B cell (primary cell): ENCODE measurements at regions of chr6 and their contacts with region 1.

Region 1: GRCh38 chr6:87154993-87155841 is at the start of gene ZNF292:
- DNase-seq: peak; percentile 98
- ATAC-seq: peak; percentile 82
- H3K4me3 ChIP-seq: peak within 1 kb of the TSS; percentile 83 to 96 (median 87)
- H3K4me3 Mint-ChIP-seq: peak within 1 kb of the TSS; percentile 92
- H3K27ac ChIP-seq: peak within 1 kb of the TSS; percentile 96 to 97
- H3K27ac Mint-ChIP-seq: peak within 1 kb of the TSS; percentile 97
- H3K4me1 ChIP-seq: peaks cover 28 to 35% of the 10 kb centered on the region in 2 donors
- H3K4me1 Mint-ChIP-seq: peaks cover 51% of the 10 kb centered on the region
- H3K27me3 ChIP-seq: no peaks in the 10 kb centered on the region
- H3K27me3 Mint-ChIP-seq: no peaks in the 10 kb centered on the region
- CTCF ChIP-seq: no peak
- total RNA-seq, gene ZNF292: 84.1 and 86.5 TPM in 2 replicates

Region 2: GRCh38 chr6:85678602-85679444 is 1476.4 kb before region 1 on chr6:
- CTCF ChIA-PET with region 1: no interaction called
- POLR2A ChIA-PET with region 1: no interaction called
- intact Hi-C with region 1: loop called (anchors 10 kb)
- DNase-seq: peak; percentile 100
- ATAC-seq: peak; percentile 90
- H3K4me3 ChIP-seq: peak overlapping the region; percentile 74 to 98 (median 91)
- H3K4me3 Mint-ChIP-seq: peak overlapping the region; percentile 92
- H3K27ac ChIP-seq: peak overlapping the region; percentile 86 to 89
- H3K27ac Mint-ChIP-seq: peak overlapping the region; percentile 95
- H3K4me1 ChIP-seq: peaks cover 25 to 36% of the 10 kb centered on the region in 2 donors
- H3K4me1 Mint-ChIP-seq: peaks cover 46% of the 10 kb centered on the region
- H3K27me3 ChIP-seq: no peaks in the 10 kb centered on the region
- H3K27me3 Mint-ChIP-seq: no peaks in the 10 kb centered on the region
- CTCF ChIP-seq: no peak

Region 3: GRCh38 chr6:86609549-86610388 is 545.4 kb before region 1 on chr6:
- CTCF ChIA-PET with region 1: no interaction called
- POLR2A ChIA-PET with region 1: no interaction called
- intact Hi-C with region 1: no loop called
- DNase-seq: no peak
- ATAC-seq: no peak
- H3K4me3 ChIP-seq: no peak overlapping the region
- H3K4me3 Mint-ChIP-seq: no peak overlapping the region
- H3K27ac ChIP-seq: no peak overlapping the region
- H3K27ac Mint-ChIP-seq: no peak overlapping the region
- H3K4me1 ChIP-seq: no peaks in the 10 kb centered on the region
- H3K4me1 Mint-ChIP-seq: no peaks in the 10 kb centered on the region
- H3K27me3 ChIP-seq: no peaks in the 10 kb centered on the region
- H3K27me3 Mint-ChIP-seq: no peaks in the 10 kb centered on the region
- CTCF ChIP-seq: no peak

Region 4: GRCh38 chr6:87210979-87211378 is 55.8 kb after region 1 on chr6:
- CTCF ChIA-PET with region 1: no interaction called
- POLR2A ChIA-PET with region 1: no interaction called
- intact Hi-C with region 1: no loop called
- DNase-seq: peak; percentile 10
- ATAC-seq: peak; percentile 21
- H3K4me3 ChIP-seq: no peak overlapping the region
- H3K4me3 Mint-ChIP-seq: no peak overlapping the region
- H3K27ac ChIP-seq: no peak overlapping the region
- H3K27ac Mint-ChIP-seq: peak overlapping the region; percentile 4
- H3K4me1 ChIP-seq: peaks cover 10 to 19% of the 10 kb centered on the region in 2 donors
- H3K4me1 Mint-ChIP-seq: peaks cover 62% of the 10 kb centered on the region
- H3K27me3 ChIP-seq: no peaks in the 10 kb centered on the region
- H3K27me3 Mint-ChIP-seq: no peaks in the 10 kb centered on the region
- CTCF ChIP-seq: no peak

Region 5: DNA sequence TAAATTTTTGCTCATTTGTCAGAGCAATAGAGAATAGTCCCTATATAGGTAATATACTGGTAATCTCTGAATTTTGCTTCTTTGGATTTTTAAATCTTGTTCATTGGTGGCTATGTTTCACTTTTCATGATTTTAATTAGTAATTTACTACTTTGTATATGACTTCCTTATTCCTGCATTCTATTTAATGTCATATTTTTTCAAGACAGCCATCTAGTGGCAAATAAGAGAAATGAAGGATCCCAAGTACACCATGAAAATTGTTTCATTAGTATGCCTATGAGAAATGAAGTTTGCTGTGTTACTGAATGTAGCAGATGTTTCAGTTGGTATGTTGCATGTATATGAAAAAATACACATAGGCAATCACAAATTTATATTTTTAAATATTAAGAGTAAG is 82.6 kb after region 1 on chr6:
- CTCF ChIA-PET with region 1: no interaction called
- POLR2A ChIA-PET with region 1: interaction called, 4 read pairs
- intact Hi-C with region 1: loop called (anchors 5 kb)
- DNase-seq: peak; percentile 39
- ATAC-seq: peak; percentile 49
- H3K4me3 ChIP-seq: no peak overlapping the region
- H3K4me3 Mint-ChIP-seq: no peak overlapping the region
- H3K27ac ChIP-seq: no peak overlapping the region
- H3K27ac Mint-ChIP-seq: no peak overlapping the region
- H3K4me1 ChIP-seq: no peaks in the 10 kb centered on the region
- H3K4me1 Mint-ChIP-seq: peaks cover 3% of the 10 kb centered on the region
- H3K27me3 ChIP-seq: no peaks in the 10 kb centered on the region
- H3K27me3 Mint-ChIP-seq: no peaks in the 10 kb centered on the region
- CTCF ChIP-seq: peak; percentile 52

Region 6: GRCh38 chr6:87407901-87408720 is 252.9 kb after region 1 on chr6 and contains the start of gene CFAP206:
- CTCF ChIA-PET with region 1: no interaction called
- POLR2A ChIA-PET with region 1: interaction called, 11 read pairs
- intact Hi-C with region 1: loop called (anchors 2 kb)
- DNase-seq: peak; percentile 91
- ATAC-seq: peak; percentile 75
- H3K4me3 ChIP-seq: peak within 1 kb of the TSS; percentile 83 to 98 (median 94)
- H3K4me3 Mint-ChIP-seq: peak within 1 kb of the TSS; percentile 91
- H3K27ac ChIP-seq: peak within 1 kb of the TSS; percentile 57 to 81
- H3K27ac Mint-ChIP-seq: peak within 1 kb of the TSS; percentile 86
- H3K4me1 ChIP-seq: peaks cover 4 to 10% of the 10 kb centered on the region in 2 donors
- H3K4me1 Mint-ChIP-seq: peaks cover 9% of the 10 kb centered on the region
- H3K27me3 ChIP-seq: peaks cover 0 to 7% (median 0%) of the 10 kb centered on the region in 4 experiments
- H3K27me3 Mint-ChIP-seq: peaks cover 8% of the 10 kb centered on the region
- CTCF ChIP-seq: no peak
- total RNA-seq, gene CFAP206: not detected in 2 replicates

Region 7: DNA sequence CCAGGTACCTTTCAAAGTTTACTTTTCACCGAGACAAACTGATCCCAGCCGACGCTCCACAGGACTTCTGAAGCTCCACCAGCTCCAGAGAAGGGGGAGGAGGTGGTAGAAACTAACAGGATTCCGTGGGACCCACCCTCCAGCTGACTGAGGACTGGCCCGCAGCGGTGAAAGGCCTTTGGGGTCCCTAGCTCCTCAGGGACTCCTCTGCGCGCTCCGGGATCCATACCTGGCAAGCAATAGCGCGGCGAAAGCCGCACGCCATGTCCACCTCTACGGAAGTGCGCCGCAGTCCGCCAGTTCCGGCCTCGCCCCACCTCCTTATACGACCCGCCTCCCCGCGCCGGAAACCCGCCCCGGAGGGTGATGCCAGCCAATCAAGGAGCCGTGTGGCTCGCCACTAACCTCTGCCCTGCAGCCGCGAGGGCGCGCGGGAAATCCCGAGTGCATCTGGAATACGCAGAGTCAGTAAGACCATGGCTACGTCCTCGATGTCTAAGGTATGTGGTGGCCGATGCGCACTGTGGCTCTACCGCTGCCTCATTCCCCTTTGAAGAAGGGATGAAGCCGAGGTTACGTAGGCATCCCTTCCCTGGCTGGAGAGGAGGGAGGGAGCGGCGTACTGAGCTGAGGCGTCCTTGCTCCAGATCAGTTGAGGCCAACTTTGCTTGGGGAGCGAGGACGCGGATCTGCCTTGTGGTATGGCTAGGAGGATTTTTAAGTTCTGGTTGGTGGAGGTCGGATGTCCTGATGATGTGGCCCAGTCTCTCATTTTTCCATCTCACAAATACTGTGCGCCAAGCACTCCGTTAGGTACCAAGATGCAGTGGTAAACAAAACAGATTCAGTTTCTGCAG is 434.7 kb after region 1 on chr6 and contains the starts of genes ORC3 and RARS2:
- CTCF ChIA-PET with region 1: no interaction called
- POLR2A ChIA-PET with region 1: no interaction called
- intact Hi-C with region 1: loop called (anchors 5 kb)
- DNase-seq: peak; percentile 94
- ATAC-seq: peak; percentile 99
- H3K4me3 ChIP-seq: peak within 1 kb of the TSS; percentile 74 to 100 (median 96)
- H3K4me3 Mint-ChIP-seq: peak within 1 kb of the TSS; percentile 96
- H3K27ac ChIP-seq: peak within 1 kb of the TSS; percentile 78 to 91
- H3K27ac Mint-ChIP-seq: peak within 1 kb of the TSS; percentile 88
- H3K4me1 ChIP-seq: peaks cover 27 to 28% of the 10 kb centered on the region in 2 donors
- H3K4me1 Mint-ChIP-seq: peaks cover 56% of the 10 kb centered on the region
- H3K27me3 ChIP-seq: no peaks in the 10 kb centered on the region
- H3K27me3 Mint-ChIP-seq: no peaks in the 10 kb centered on the region
- CTCF ChIP-seq: no peak
- total RNA-seq, gene ORC3: 27.8 and 31.2 TPM in 2 replicates
- total RNA-seq, gene RARS2: 37.9 and 38.7 TPM in 2 replicates

Region 8: GRCh38 chr6:88963139-88964090 is 1808.2 kb after region 1 on chr6 and contains the start of gene RNGTT:
- CTCF ChIA-PET with region 1: no interaction called
- POLR2A ChIA-PET with region 1: no interaction called
- intact Hi-C with region 1: loop called (anchors 1 kb)
- DNase-seq: peak; percentile 97
- ATAC-seq: peak; percentile 100
- H3K4me3 ChIP-seq: peak within 1 kb of the TSS; percentile 92 to 94 (median 94)
- H3K4me3 Mint-ChIP-seq: peak within 1 kb of the TSS; percentile 98
- H3K27ac ChIP-seq: peak within 1 kb of the TSS; percentile 64 to 87
- H3K27ac Mint-ChIP-seq: peak within 1 kb of the TSS; percentile 96
- H3K4me1 ChIP-seq: peaks cover 10 to 17% of the 10 kb centered on the region in 2 donors
- H3K4me1 Mint-ChIP-seq: peaks cover 34% of the 10 kb centered on the region
- H3K27me3 ChIP-seq: no peaks in the 10 kb centered on the region
- H3K27me3 Mint-ChIP-seq: no peaks in the 10 kb centered on the region
- CTCF ChIP-seq: no peak
- total RNA-seq, gene RNGTT: 29.1 and 34.0 TPM in 2 replicates